Sigmoid colon (tissue), 7 donors: ENCODE measurements at regions of chr1 and their contacts with region 1.

Region 1: GRCh38 chr1:232950197-232951176 is at the start of gene NTPCR:
- DNase-seq: peak; percentile 95
- H3K4me3 ChIP-seq: peak within 1 kb of the TSS; percentile 75 to 99 (median 94)
- H3K27ac ChIP-seq: peak within 1 kb of the TSS; percentile 79 to 84 (median 82)
- H3K4me1 ChIP-seq: peaks cover 0 to 23% (median 14%) of the 10 kb centered on the region in 4 donors
- H3K27me3 ChIP-seq: no peaks in the 10 kb centered on the region
- CTCF ChIP-seq: peak in 2 of 4 experiments; percentile 11 to 15
- EP300 ChIP-seq: no peak
- POLR2A ChIP-seq: peak in 1 of 2 donors; percentile 41
- total RNA-seq, gene NTPCR: 20.5 to 43.2 (median 27.1) TPM

Region 2: GRCh38 chr1:232805269-232806185 is 145.0 kb before region 1 on chr1 and contains the start of gene MAP10:
- intact Hi-C with region 1: loop called (anchors 10 kb)
- DNase-seq: peak; percentile 82
- H3K4me3 ChIP-seq: peak within 1 kb of the TSS; percentile 63 to 80 (median 70)
- H3K27ac ChIP-seq: peak within 1 kb of the TSS; percentile 75 to 80 (median 76)
- H3K4me1 ChIP-seq: peaks cover 0 to 17% (median 8%) of the 10 kb centered on the region in 4 donors
- H3K27me3 ChIP-seq: no peaks in the 10 kb centered on the region
- CTCF ChIP-seq: no peak
- EP300 ChIP-seq: no peak
- POLR2A ChIP-seq: no peak
- total RNA-seq, gene MAP10: 1.4 to 3.3 (median 2.7) TPM

Region 3: GRCh38 chr1:232923739-232924386 is 26.6 kb before region 1 on chr1:
- intact Hi-C with region 1: no loop called
- DNase-seq: no peak
- H3K4me3 ChIP-seq: no peak overlapping the region
- H3K27ac ChIP-seq: no peak overlapping the region
- H3K4me1 ChIP-seq: no peaks in the 10 kb centered on the region
- H3K27me3 ChIP-seq: no peaks in the 10 kb centered on the region
- CTCF ChIP-seq: no peak
- EP300 ChIP-seq: no peak
- POLR2A ChIP-seq: no peak